Panc1 (cell line): ENCODE measurements at regions of chr19 and their contacts with region 1.

Region 1: DNA sequence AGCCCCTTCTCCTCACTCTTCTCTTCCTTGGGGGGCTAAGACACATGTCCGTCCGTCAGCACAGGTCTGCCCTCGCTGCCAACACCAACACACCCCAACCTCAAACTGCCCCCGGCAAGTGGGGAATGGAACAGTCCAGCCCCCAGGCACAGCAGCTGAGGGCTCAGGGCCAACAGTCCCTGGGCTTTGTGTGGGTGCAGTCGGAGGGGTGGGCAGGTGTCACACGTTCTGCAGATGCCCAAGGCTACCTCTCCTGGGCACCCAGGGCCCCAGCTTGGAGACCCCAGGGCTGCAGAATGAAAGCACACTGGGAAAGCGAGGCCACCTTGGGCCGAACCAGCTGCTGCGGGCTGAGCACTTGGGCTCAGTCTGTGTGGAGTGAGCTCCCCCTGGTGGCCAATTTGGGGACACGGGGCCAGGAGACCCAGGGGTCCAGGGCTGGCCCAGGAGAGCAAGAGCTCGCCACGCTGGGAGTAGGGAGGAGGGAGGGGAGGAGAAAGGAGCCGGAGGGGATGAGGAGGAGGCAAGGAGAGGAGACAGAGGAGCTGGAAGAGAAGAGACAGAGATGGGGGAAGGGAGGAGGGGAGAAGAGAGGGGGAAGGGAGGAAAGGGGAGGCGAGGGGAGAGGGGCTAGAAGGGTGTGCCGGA is 14.0 kb upstream of the ATP8B3 start:
- DNase-seq: no peak
- ATAC-seq: peak; percentile 86
- H3K4me3 ChIP-seq: no peak overlapping the region; a peak in 1 of 4 replicates
- H3K27ac ChIP-seq: peak overlapping the region; percentile 72
- H3K4me1 ChIP-seq: peaks cover 23% of the 10 kb centered on the region
- H3K27me3 ChIP-seq: no peaks in the 10 kb centered on the region
- CTCF ChIP-seq: peak; percentile 91

Region 2: GRCh38 chr19:1461862-1462261 is 364.2 kb before region 1 on chr19:
- CTCF ChIA-PET with region 1: interaction called, 17 read pairs
- POLR2A ChIA-PET with region 1: no interaction called
- in situ Hi-C with region 1: no loop called
- intact Hi-C with region 1: no loop called
- DNase-seq: no peak
- ATAC-seq: no peak
- H3K4me3 ChIP-seq: no peak overlapping the region
- H3K27ac ChIP-seq: no peak overlapping the region
- H3K4me1 ChIP-seq: no peaks in the 10 kb centered on the region
- H3K27me3 ChIP-seq: no peaks in the 10 kb centered on the region
- CTCF ChIP-seq: no peak

Region 3: GRCh38 chr19:1807722-1808397 is 18.2 kb before region 1 on chr19:
- CTCF ChIA-PET with region 1: interaction called, 13 read pairs
- POLR2A ChIA-PET with region 1: no interaction called
- in situ Hi-C with region 1: no loop called
- intact Hi-C with region 1: no loop called
- DNase-seq: no peak
- ATAC-seq: no peak
- H3K4me3 ChIP-seq: no peak overlapping the region
- H3K27ac ChIP-seq: no peak overlapping the region
- H3K4me1 ChIP-seq: peaks cover 5% of the 10 kb centered on the region; the same call in 1 of the 2 replicates
- H3K27me3 ChIP-seq: no peaks in the 10 kb centered on the region
- CTCF ChIP-seq: no peak

Region 4: GRCh38 chr19:1837625-1838105 is 11.6 kb after region 1 on chr19:
- CTCF ChIA-PET with region 1: interaction called, 14 read pairs
- POLR2A ChIA-PET with region 1: no interaction called
- in situ Hi-C with region 1: no loop called
- intact Hi-C with region 1: no loop called
- DNase-seq: no peak
- ATAC-seq: peak; percentile 55
- H3K4me3 ChIP-seq: no peak overlapping the region; a peak in 1 of 4 replicates
- H3K27ac ChIP-seq: 0 out of 2 replicates have a peak overlapping the region, but pooled peaks have one; percentile 12
- H3K4me1 ChIP-seq: peaks cover 29% of the 10 kb centered on the region
- H3K27me3 ChIP-seq: no peaks in the 10 kb centered on the region
- CTCF ChIP-seq: peak; percentile 95